IMR-90 (cell line): ENCODE measurements at regions of chr7 and their contacts with region 1.

Region 1: DNA sequence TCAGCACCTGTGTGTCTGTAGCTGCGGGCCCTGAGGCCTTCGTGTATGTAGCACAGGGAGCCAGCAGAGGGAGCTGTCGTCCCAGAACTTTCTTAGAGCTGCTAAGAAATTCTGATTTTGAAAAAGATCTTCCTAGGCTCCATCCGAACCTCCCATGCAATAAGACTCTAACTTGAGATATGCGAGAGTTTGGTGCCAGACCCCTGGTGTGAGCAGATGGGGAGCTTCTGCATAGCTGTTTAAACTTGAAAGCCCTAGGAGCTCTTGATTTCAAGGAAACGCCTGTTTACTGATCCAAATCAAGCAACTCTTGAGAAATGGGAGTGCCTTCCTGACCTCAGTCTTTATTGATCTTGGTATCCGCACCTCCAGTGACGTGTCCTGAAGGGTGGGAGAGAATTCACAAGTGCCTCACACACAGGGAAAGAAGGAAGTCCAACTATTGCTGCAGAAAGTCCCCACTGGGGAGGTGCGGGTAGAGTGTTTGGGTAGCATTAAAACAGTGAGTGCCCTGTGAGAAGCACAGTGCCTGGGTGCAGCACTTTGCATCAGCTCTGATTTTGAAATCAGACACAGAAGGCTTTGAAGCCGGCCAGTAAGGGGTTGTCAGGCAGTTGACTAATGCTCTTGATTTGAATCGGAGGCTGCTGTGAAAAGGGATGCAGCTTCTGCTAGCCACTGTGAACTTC is 66.4 kb upstream of the STRIP2 start:
- DNase-seq: peak; percentile 72
- ATAC-seq: peak; percentile 96
- H3K4me3 ChIP-seq: no peak overlapping the region
- H3K27ac ChIP-seq: no peak overlapping the region
- H3K4me1 ChIP-seq: peaks cover 1% of the 10 kb centered on the region; the same call in 1 of the 2 replicates
- H3K27me3 ChIP-seq: no peaks in the 10 kb centered on the region
- CTCF ChIP-seq: peak; percentile 89
- POLR2A ChIP-seq: no peak
- RAD21 ChIP-seq: peak; percentile 87

Region 2: GRCh38 chr7:129271500-129272355 is 96.1 kb before region 1 on chr7:
- CTCF ChIA-PET with region 1: no interaction called
- POLR2A ChIA-PET with region 1: no interaction called
- dilution Hi-C with region 1: no loop called
- in situ Hi-C with region 1: no loop called
- intact Hi-C with region 1: no loop called
- DNase-seq: peak; percentile 43
- ATAC-seq: 0 out of 2 replicates have a peak, but pooled peaks have one; percentile 24
- H3K4me3 ChIP-seq: no peak overlapping the region
- H3K27ac ChIP-seq: no peak overlapping the region
- H3K4me1 ChIP-seq: no peaks in the 10 kb centered on the region
- H3K27me3 ChIP-seq: no peaks in the 10 kb centered on the region
- CTCF ChIP-seq: peak; percentile 46
- POLR2A ChIP-seq: no peak
- RAD21 ChIP-seq: peak; percentile 47

Region 3: DNA sequence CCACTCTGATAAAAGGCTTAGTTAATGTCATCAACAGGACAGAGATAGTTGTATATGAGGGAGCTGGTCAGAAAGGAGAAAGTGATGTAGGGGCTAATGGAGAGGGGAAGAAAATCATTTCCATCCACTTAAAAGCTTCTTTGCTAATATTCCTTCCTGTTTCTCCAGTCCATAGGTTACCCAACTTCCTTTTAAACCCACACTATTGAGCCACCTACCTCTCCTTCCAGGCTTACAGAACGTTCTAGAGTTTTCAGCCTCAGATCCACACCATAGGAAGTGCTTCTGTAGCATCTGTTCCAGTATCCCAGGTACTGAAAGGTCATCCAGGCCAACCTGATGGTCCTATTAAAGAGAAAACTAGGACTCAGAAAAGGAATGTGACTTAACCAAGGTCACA is 94.6 kb after region 1 on chr7:
- CTCF ChIA-PET with region 1: interaction called, 16 read pairs
- POLR2A ChIA-PET with region 1: no interaction called
- dilution Hi-C with region 1: no loop called
- in situ Hi-C with region 1: loop called (anchors 5 kb)
- intact Hi-C with region 1: no loop called
- DNase-seq: no peak
- ATAC-seq: no peak
- H3K4me3 ChIP-seq: no peak overlapping the region
- H3K27ac ChIP-seq: no peak overlapping the region
- H3K4me1 ChIP-seq: no peaks in the 10 kb centered on the region
- H3K27me3 ChIP-seq: no peaks in the 10 kb centered on the region
- CTCF ChIP-seq: no peak
- POLR2A ChIP-seq: no peak
- RAD21 ChIP-seq: no peak

Region 4: GRCh38 chr7:129626896-129627295 is 259.1 kb after region 1 on chr7:
- CTCF ChIA-PET with region 1: no interaction called
- POLR2A ChIA-PET with region 1: no interaction called
- dilution Hi-C with region 1: no loop called
- in situ Hi-C with region 1: loop called (anchors 10 kb)
- intact Hi-C with region 1: no loop called
- DNase-seq: no peak
- ATAC-seq: no peak
- H3K4me3 ChIP-seq: no peak overlapping the region
- H3K27ac ChIP-seq: no peak overlapping the region
- H3K4me1 ChIP-seq: no peaks in the 10 kb centered on the region
- H3K27me3 ChIP-seq: no peaks in the 10 kb centered on the region
- CTCF ChIP-seq: no peak
- POLR2A ChIP-seq: no peak
- RAD21 ChIP-seq: no peak

Region 5: DNA sequence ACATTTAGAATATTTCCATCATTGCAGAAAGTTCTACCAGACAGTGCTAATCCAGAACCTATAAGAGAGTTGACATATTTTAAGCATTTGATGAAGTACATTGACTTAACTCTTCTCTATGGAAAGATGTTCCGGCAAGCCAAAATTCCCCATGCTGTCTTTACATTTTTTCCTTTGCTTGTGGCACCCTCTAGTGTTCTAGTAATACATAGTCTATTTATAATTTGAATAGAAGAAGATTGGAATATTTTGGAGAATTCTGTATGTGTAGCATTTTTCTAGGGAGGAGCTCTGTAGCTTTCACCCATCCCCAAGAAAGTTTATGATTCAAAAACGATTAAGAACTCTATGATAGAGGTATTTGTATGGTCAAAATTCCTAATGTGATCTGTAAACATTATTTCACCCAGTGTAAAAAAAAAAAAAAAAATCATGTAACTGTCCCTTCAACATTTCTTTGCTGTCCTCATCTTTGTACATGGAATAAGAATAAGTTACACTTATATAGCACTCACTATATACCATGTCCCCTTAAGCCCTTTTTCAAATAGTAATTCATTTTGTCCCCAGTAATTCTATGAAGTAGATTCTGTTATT is 276.9 kb after region 1 on chr7:
- CTCF ChIA-PET with region 1: interaction called, 5 read pairs
- POLR2A ChIA-PET with region 1: no interaction called
- dilution Hi-C with region 1: no loop called
- in situ Hi-C with region 1: no loop called
- intact Hi-C with region 1: loop called (anchors 1 kb)
- DNase-seq: peak; percentile 68
- ATAC-seq: peak; percentile 55
- H3K4me3 ChIP-seq: no peak overlapping the region
- H3K27ac ChIP-seq: no peak overlapping the region
- H3K4me1 ChIP-seq: peaks cover 12% of the 10 kb centered on the region
- H3K27me3 ChIP-seq: no peaks in the 10 kb centered on the region
- CTCF ChIP-seq: peak; percentile 67
- POLR2A ChIP-seq: no peak
- RAD21 ChIP-seq: peak; percentile 73